Ascending aorta (tissue), 2 donors: ENCODE measurements at regions of chr5 and their contacts with region 1.

Region 1: DNA sequence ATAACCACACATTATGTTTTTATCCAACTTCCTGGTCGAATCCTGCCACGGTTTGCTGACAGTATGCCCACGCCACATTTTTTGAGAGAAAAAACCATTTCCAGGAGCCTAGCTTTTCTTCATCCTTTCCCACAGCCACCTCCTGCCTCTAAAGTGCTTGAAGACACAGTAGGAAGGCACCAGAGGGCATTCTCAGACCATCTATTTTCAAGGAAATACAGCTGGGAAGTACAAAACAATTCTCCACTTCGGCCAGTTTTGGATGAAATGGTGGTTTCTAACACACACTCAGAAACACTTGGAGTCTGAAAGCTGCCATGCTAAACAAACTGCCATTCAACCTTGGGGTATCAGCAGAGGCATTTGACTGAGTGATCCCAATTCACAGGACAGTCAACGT is 86.3 kb upstream of the RPS23 start:
- DNase-seq: no peak
- H3K4me3 ChIP-seq: no peak overlapping the region
- H3K27ac ChIP-seq: peak overlapping the region in 1 of 2 donors; percentile 32
- H3K4me1 ChIP-seq: peaks cover 0 to 10% of the 10 kb centered on the region in 2 donors
- H3K27me3 ChIP-seq: no peaks in the 10 kb centered on the region
- CTCF ChIP-seq: peak in 2 of 3 experiments; percentile 48 to 70

Region 2: GRCh38 chr5:82011761-82012160 is 352.7 kb before region 1 on chr5:
- intact Hi-C with region 1: no loop called
- DNase-seq: peak in 1 of 2 donors; percentile 64
- H3K4me3 ChIP-seq: no peak overlapping the region
- H3K27ac ChIP-seq: no peak overlapping the region
- H3K4me1 ChIP-seq: no peaks in the 10 kb centered on the region
- H3K27me3 ChIP-seq: no peaks in the 10 kb centered on the region
- CTCF ChIP-seq: no peak

Region 3: DNA sequence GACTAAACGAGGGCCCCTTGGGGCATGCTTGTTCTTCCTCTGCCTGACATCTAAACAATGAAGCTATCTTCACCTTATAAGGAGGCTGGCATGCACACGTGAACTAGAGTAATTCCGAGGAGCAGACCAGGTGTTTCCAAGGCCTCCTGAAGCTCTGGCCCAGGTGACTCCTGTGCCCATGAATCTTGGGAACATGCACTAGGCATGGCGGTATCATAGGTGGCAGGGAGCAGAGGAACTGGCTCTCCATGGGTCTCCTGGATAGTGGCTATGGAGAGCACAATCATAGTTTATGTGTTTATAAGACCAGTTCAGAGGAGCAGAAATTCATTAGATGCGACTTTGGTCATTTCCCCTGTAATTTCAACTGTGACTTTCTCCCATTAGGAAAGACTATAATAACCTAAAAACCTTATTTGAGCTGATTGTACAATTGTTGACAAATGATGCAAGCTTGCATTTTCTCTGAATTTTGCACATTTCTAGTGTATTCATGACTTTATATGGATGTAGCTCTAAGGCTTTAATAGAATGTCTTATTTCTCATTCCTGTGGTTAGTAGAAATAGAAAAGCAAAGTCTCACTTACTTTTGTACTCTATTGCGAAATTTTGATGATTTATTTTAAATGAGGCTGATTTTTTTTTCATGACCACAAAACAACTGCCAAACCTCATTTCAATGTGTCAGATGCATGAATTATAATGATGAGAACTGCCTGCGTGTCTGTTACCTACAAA is 49.0 kb after region 1 on chr5:
- intact Hi-C with region 1: no loop called
- DNase-seq: no peak
- H3K4me3 ChIP-seq: no peak overlapping the region
- H3K27ac ChIP-seq: peak overlapping the region; percentile 42 to 52
- H3K4me1 ChIP-seq: peaks cover 0 to 11% of the 10 kb centered on the region in 2 donors
- H3K27me3 ChIP-seq: no peaks in the 10 kb centered on the region
- CTCF ChIP-seq: no peak

Region 4: GRCh38 chr5:82466986-82467561 is 102.6 kb after region 1 on chr5:
- intact Hi-C with region 1: loop called (anchors 1 kb)
- DNase-seq: no peak
- H3K4me3 ChIP-seq: peak overlapping the region in 1 of 2 donors; percentile 51
- H3K27ac ChIP-seq: peak overlapping the region; percentile 5 to 67
- H3K4me1 ChIP-seq: peaks cover 3 to 5% of the 10 kb centered on the region in 2 donors
- H3K27me3 ChIP-seq: no peaks in the 10 kb centered on the region
- CTCF ChIP-seq: peak in 2 of 3 experiments; percentile 32 to 49

Region 5: GRCh38 chr5:82551840-82552385 is 187.4 kb after region 1 on chr5:
- intact Hi-C with region 1: loop called (anchors 5 kb)
- DNase-seq: no peak
- H3K4me3 ChIP-seq: peak overlapping the region in 1 of 2 donors; percentile 34
- H3K27ac ChIP-seq: peak overlapping the region; percentile 64 to 77
- H3K4me1 ChIP-seq: peaks cover 0 to 15% of the 10 kb centered on the region in 2 donors
- H3K27me3 ChIP-seq: no peaks in the 10 kb centered on the region
- CTCF ChIP-seq: no peak

Region 6: DNA sequence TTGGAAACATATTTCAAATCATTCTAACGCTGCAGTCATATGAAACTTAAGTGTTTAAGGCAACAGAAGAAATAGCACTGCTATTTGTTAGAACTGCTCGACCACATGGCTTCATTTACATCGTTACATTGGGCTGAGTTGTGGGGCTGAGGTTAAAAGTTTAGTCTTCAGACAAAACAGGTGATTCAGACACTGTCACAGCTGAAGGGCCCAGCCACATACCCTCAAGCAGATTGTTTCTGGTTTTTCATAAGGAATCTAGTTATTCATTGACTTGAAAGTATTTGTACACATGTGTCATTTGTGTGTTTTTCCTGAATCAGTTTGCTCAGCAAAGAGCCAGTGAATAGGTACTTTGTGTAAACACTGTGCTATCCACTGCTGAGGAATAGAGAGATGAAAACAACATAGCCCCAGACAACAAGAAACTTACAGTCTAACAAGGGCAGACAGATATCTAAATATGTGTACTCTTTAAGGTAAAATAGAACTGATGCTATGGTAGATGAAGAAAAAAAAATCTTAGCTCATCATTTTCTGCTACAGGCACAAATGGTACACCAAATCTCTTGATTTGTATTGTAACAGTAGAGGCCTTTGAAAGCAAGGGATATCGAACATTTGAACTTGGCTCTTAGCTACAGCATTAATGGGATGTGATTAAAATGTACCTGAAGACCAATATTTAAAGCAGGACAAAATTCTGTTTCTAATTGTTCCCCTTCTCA is 271.2 kb after region 1 on chr5:
- intact Hi-C with region 1: loop called (anchors 5 kb)
- DNase-seq: no peak
- H3K4me3 ChIP-seq: no peak overlapping the region
- H3K27ac ChIP-seq: peak overlapping the region in 1 of 2 donors; percentile 14
- H3K4me1 ChIP-seq: peaks cover 1 to 13% of the 10 kb centered on the region in 2 donors
- H3K27me3 ChIP-seq: no peaks in the 10 kb centered on the region
- CTCF ChIP-seq: no peak

Region 7: DNA sequence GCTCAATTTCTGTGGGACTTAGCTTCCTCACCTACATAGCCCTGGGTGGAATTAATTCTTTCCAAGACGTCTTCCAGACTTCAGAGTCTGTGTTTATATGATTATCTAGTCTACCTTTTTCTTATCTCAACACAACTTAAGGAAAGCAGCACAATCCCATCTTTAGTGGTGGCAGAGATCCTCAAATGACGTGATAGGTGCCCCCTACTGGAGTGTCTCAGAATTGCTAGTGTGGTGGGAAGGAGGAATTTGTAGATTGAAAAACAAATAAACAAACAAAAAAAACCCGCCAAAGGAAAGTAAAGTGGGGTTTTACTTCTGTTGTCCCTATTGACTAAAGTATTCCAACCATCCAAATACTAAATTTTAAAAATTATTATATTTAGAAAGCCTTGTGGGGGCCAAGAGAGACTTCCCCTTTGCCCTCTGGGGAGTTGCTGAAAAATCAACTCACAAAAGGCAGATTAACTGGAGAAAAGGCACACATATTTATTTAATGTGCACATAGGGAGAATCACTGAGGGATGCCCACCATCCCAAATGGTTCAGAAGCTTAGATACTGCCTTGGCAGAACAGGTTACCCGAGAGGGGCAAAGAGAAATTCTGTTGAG is 429.4 kb after region 1 on chr5:
- intact Hi-C with region 1: loop called (anchors 10 kb)
- DNase-seq: no peak
- H3K4me3 ChIP-seq: no peak overlapping the region
- H3K27ac ChIP-seq: no peak overlapping the region
- H3K4me1 ChIP-seq: no peaks in the 10 kb centered on the region
- H3K27me3 ChIP-seq: no peaks in the 10 kb centered on the region
- CTCF ChIP-seq: peak; percentile 14 to 49 (median 44)

Region 8: DNA sequence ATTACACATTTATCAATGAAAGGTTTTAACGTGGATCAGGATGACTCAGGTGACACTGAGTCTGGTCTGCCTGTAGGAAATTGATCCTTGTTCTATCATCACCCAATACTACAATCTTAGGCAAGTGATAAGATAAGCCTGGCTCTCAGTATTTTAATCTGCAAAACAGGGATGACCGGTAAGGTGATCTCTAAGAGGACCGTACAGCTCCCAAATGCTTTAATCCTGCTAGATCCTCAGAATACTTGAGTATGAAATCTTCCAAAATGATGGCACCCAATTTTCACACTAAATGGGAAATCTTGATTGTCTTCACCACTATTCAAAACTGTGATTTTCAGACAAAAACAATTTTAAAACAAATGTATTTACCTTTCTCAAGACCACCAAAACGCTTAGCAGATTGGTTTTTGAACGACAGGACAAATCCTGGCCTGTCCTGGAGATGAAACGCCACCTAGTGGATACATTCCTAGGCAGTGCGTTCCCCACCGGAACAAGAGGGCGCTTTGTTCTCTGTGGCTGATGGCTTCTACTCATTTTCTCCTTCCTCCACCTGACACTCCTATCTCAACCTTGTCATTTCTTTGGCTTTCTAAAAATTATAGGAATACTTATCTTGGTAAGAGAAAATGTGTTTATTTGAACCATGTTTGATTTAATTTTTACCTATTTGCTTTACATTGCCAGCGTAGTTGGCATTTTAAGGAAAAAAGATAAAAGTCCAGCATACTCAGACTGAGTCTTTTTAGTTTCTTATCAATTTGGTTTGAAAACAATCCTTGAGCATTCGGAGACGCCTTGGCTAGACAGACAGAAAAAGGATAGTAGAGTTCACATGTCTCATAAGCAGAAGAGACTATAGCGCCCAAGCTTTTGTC is 1065.9 kb after region 1 on chr5:
- intact Hi-C with region 1: loop called (anchors 5 kb)
- DNase-seq: peak in 1 of 2 donors; percentile 77
- H3K4me3 ChIP-seq: no peak overlapping the region
- H3K27ac ChIP-seq: no peak overlapping the region
- H3K4me1 ChIP-seq: peaks cover 0 to 3% of the 10 kb centered on the region in 2 donors
- H3K27me3 ChIP-seq: no peaks in the 10 kb centered on the region
- CTCF ChIP-seq: peak; percentile 54 to 84 (median 83)